B cell (primary cell): ENCODE measurements at regions of chr20 and their contacts with region 1.

Region 1: DNA sequence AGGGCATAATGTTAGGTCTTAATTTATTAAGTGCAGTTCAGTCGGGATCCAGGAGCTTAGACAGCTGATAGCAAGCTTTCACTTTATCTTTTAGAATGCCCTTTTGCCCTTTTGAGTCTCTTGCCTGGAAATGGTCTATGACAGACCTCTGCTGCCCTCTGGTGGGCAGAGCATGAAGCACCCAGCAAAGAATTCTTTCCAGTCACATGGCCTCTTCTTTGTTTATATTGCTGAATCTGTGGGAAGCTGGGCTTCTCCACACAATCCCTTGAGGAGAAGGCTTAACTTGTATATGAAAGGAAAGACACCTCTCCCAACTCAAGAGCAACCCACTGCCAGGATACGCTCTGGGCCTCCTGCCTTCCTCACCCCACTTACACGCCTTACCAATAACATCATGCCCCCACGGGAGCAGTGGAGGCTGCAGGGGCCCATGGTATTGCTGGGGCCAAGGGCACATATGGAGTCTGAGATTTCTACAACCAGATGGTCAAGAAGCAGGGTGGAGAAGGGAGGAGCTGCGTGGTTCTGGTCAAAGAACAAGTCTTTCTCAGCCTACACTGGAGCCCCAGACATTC is 20.4 kb downstream of the WFDC3 start:
- DNase-seq: peak; percentile 86
- ATAC-seq: peak; percentile 73
- H3K4me3 ChIP-seq: no peak overlapping the region
- H3K4me3 Mint-ChIP-seq: no peak overlapping the region
- H3K27ac ChIP-seq: no peak overlapping the region
- H3K27ac Mint-ChIP-seq: no peak overlapping the region
- H3K4me1 ChIP-seq: peaks cover 0 to 6% of the 10 kb centered on the region in 2 donors
- H3K4me1 Mint-ChIP-seq: peaks cover 5% of the 10 kb centered on the region
- H3K27me3 ChIP-seq: peaks cover 0 to 6% (median 1%) of the 10 kb centered on the region in 4 experiments
- H3K27me3 Mint-ChIP-seq: peaks cover 18% of the 10 kb centered on the region
- CTCF ChIP-seq: peak; percentile 95

Region 2: GRCh38 chr20:45138561-45139300 is 632.5 kb before region 1 on chr20:
- CTCF ChIA-PET with region 1: interaction called, 6 read pairs
- POLR2A ChIA-PET with region 1: no interaction called
- intact Hi-C with region 1: loop called (anchors 2 kb)
- DNase-seq: peak; percentile 37
- ATAC-seq: no peak
- H3K4me3 ChIP-seq: no peak overlapping the region
- H3K4me3 Mint-ChIP-seq: no peak overlapping the region
- H3K27ac ChIP-seq: no peak overlapping the region
- H3K27ac Mint-ChIP-seq: no peak overlapping the region
- H3K4me1 ChIP-seq: no peaks in the 10 kb centered on the region
- H3K4me1 Mint-ChIP-seq: no peaks in the 10 kb centered on the region
- H3K27me3 ChIP-seq: peaks cover 0 to 21% (median 17%) of the 10 kb centered on the region in 4 experiments
- H3K27me3 Mint-ChIP-seq: peaks cover 5% of the 10 kb centered on the region
- CTCF ChIP-seq: peak; percentile 36

Region 3: DNA sequence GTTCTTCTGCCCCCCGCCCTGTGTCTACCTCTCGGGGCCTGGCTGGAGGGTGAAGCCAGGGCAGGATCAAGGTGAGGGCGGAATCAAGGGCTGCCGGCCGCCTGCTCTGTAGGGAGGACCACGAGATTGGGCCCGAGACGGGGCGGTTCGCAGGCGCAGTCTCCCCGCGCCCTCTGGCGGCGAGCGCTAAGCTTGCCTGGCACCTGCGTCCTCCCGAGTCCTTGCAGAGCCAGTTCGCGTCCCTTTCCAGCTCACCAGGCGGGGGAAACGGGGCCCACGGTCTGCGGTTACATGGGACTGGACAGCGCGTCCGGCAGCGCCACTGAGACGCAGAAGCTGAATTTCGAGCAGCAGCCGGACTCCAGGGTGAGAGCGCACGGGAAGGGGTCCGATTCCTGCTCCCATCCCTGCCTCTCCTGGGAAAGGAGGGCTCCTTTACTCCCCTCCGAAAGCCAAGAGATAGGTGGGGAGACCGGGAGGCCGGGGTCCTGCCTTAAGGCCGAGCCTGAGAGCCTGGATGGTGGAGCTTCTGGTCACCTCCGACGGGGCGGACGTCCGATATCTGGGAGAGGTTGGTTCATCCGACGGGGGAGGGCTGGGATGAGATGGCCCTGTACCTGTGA is 459.6 kb before region 1 on chr20:
- CTCF ChIA-PET with region 1: interaction called, 135 read pairs
- POLR2A ChIA-PET with region 1: no interaction called
- intact Hi-C with region 1: loop called (anchors 1 kb)
- DNase-seq: peak; percentile 77
- ATAC-seq: peak; percentile 64
- H3K4me3 ChIP-seq: no peak overlapping the region
- H3K4me3 Mint-ChIP-seq: no peak overlapping the region
- H3K27ac ChIP-seq: no peak overlapping the region
- H3K27ac Mint-ChIP-seq: no peak overlapping the region
- H3K4me1 ChIP-seq: peaks cover 15 to 16% of the 10 kb centered on the region in 2 donors
- H3K4me1 Mint-ChIP-seq: peaks cover 7% of the 10 kb centered on the region
- H3K27me3 ChIP-seq: peaks cover 0 to 67% (median 18%) of the 10 kb centered on the region in 4 experiments
- H3K27me3 Mint-ChIP-seq: peaks cover 59% of the 10 kb centered on the region
- CTCF ChIP-seq: peak; percentile 82

Region 4: DNA sequence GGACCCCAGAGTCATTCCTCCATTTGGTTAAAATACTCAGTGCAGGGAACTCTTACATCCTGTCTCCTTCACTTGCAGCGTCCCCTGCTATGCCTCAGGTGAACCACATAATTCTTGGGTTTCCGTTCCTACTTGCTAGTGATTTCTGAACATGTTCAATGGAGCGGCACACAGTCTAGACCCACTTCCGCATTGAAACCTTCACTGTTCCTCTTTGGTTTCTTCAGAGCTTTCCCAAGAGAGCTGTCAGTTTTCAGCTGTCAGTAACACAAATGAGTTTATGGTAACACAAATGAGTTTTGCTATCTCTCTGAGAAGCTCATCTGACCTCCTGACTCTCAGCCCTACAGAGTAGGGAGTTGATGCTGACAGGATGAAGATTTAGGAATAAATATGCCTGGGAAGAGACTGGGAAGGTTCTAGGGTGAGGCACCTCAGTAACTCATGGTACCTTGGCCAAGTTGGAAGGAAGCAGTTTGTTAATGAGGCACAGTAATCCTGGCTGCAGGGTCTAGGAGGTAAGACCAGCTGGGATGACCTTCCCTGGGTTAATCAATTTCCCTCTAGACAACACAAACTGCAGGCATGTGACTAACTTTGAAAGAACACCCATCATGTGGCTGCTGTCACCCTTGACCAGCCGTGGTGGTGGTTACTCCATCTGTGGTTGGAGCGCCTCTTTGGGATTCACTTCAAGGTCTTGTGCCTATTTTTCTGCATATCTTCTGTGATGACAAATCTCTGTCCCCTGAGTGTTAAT is 402.9 kb before region 1 on chr20:
- CTCF ChIA-PET with region 1: interaction called, 56 read pairs
- POLR2A ChIA-PET with region 1: interaction called, 3 read pairs
- intact Hi-C with region 1: loop called (anchors 1 kb)
- DNase-seq: peak; percentile 94
- ATAC-seq: peak; percentile 80
- H3K4me3 ChIP-seq: peak overlapping the region in 3 of 5 experiments; percentile 15 to 46 (median 18)
- H3K4me3 Mint-ChIP-seq: peak overlapping the region; percentile 86
- H3K27ac ChIP-seq: peak overlapping the region; percentile 43 to 94
- H3K27ac Mint-ChIP-seq: peak overlapping the region; percentile 92
- H3K4me1 ChIP-seq: peaks cover 95 to 98% of the 10 kb centered on the region in 2 donors
- H3K4me1 Mint-ChIP-seq: peaks cover 86% of the 10 kb centered on the region
- H3K27me3 ChIP-seq: no peaks in the 10 kb centered on the region
- H3K27me3 Mint-ChIP-seq: no peaks in the 10 kb centered on the region
- CTCF ChIP-seq: peak; percentile 28

Region 5: DNA sequence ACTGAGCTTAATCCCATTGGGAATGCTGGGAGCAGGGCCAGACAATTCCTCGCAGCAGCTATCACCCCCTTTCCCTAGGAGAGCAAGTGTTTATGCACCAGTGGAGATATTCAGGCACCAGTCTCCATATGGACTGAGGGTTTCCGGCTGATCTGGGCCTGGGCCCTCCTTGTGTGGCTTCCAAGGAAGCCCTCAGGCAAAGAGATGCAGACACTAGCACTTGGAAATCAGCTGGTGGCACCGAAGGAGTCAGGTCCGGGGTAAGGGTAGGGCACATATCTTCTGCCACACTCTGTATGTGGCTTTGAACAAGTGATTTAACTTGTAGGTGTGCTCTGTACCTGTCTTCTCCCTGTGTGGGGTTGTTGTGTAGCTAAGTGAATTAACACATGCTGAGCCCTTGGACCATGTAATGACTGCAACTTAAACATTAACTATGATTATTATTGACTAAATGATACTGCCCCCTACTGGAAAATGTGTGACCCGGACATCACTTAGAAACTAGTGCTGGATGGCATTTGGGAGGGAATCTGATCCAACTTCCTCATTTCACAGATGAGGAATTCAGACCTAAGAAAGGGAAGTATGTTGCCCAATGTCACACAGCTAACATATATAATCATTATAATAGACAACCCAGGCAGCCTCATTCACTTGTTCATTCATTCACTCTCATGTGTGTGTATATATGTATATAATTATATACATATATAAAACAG is 321.0 kb before region 1 on chr20:
- CTCF ChIA-PET with region 1: interaction called, 8 read pairs
- POLR2A ChIA-PET with region 1: no interaction called
- intact Hi-C with region 1: loop called (anchors 10 kb)
- DNase-seq: peak; percentile 75
- ATAC-seq: peak; percentile 57
- H3K4me3 ChIP-seq: no peak overlapping the region
- H3K4me3 Mint-ChIP-seq: no peak overlapping the region
- H3K27ac ChIP-seq: no peak overlapping the region
- H3K27ac Mint-ChIP-seq: no peak overlapping the region
- H3K4me1 ChIP-seq: peaks cover 12 to 16% of the 10 kb centered on the region in 2 donors
- H3K4me1 Mint-ChIP-seq: peaks cover 17% of the 10 kb centered on the region
- H3K27me3 ChIP-seq: peaks cover 0 to 5% (median 0%) of the 10 kb centered on the region in 4 experiments
- H3K27me3 Mint-ChIP-seq: peaks cover 6% of the 10 kb centered on the region
- CTCF ChIP-seq: peak; percentile 75

Region 6: GRCh38 chr20:45629496-45630100 is 141.7 kb before region 1 on chr20 and contains the start of gene WFDC10A:
- CTCF ChIA-PET with region 1: interaction called, 18 read pairs
- POLR2A ChIA-PET with region 1: no interaction called
- intact Hi-C with region 1: loop called (anchors 1 kb)
- DNase-seq: peak; percentile 54
- ATAC-seq: peak; percentile 67
- H3K4me3 ChIP-seq: no peak within 1 kb of the TSS
- H3K4me3 Mint-ChIP-seq: peak within 1 kb of the TSS; percentile 32
- H3K27ac ChIP-seq: no peak within 1 kb of the TSS
- H3K27ac Mint-ChIP-seq: no peak within 1 kb of the TSS
- H3K4me1 ChIP-seq: peaks cover 4 to 5% of the 10 kb centered on the region in 2 donors
- H3K4me1 Mint-ChIP-seq: peaks cover 4% of the 10 kb centered on the region
- H3K27me3 ChIP-seq: peaks cover 0 to 4% (median 0%) of the 10 kb centered on the region in 4 experiments
- H3K27me3 Mint-ChIP-seq: peaks cover 37% of the 10 kb centered on the region
- CTCF ChIP-seq: peak; percentile 78
- total RNA-seq, gene WFDC10A: not detected in 2 replicates